ENCODE measurements at regions of chr6 and their contacts with region 1.

Region 1: GRCh38 chr6:166382933-166383801 is at the start of gene MPC1:
- DNase-seq: peak; percentile 96
- H3K4me3 ChIP-seq: peak within 1 kb of the TSS; percentile 82 to 95 (median 94)
- H3K27ac ChIP-seq: peak within 1 kb of the TSS; percentile 68
- H3K4me1 ChIP-seq: peaks cover 4% of the 10 kb centered on the region
- H3K27me3 ChIP-seq: no peaks in the 10 kb centered on the region
- CTCF ChIP-seq: no peak
- POLR2A ChIP-seq: peak; percentile 16
- total RNA-seq, gene MPC1: 17.5 and 22.9 TPM in 2 replicates

Region 2: GRCh38 chr6:165717732-165718465 is 665.3 kb before region 1 on chr6:
- CTCF ChIA-PET with region 1: no interaction called
- POLR2A ChIA-PET with region 1: no interaction called
- dilution Hi-C with region 1: no loop called
- intact Hi-C with region 1: no loop called
- DNase-seq: peak; percentile 53
- H3K4me3 ChIP-seq: no peak overlapping the region
- H3K27ac ChIP-seq: no peak overlapping the region
- H3K4me1 ChIP-seq: peaks cover 5% of the 10 kb centered on the region
- H3K27me3 ChIP-seq: peaks cover 0 to 2% of the 10 kb centered on the region in 2 experiments
- CTCF ChIP-seq: no peak
- POLR2A ChIP-seq: no peak

Region 3: GRCh38 chr6:166275714-166276166 is 107.4 kb before region 1 on chr6:
- CTCF ChIA-PET with region 1: interaction called, 13 read pairs
- POLR2A ChIA-PET with region 1: no interaction called
- dilution Hi-C with region 1: no loop called
- intact Hi-C with region 1: loop called (anchors 1 kb)
- DNase-seq: peak; percentile 54
- H3K4me3 ChIP-seq: no peak overlapping the region
- H3K27ac ChIP-seq: no peak overlapping the region
- H3K4me1 ChIP-seq: no peaks in the 10 kb centered on the region
- H3K27me3 ChIP-seq: no peaks in the 10 kb centered on the region
- CTCF ChIP-seq: peak; percentile 93 to 98
- POLR2A ChIP-seq: no peak

Region 4: GRCh38 chr6:166313255-166314070 is 69.7 kb before region 1 on chr6:
- CTCF ChIA-PET with region 1: interaction called, 22 read pairs
- POLR2A ChIA-PET with region 1: no interaction called
- dilution Hi-C with region 1: no loop called
- intact Hi-C with region 1: loop called (anchors 1 kb)
- DNase-seq: peak; percentile 45
- H3K4me3 ChIP-seq: no peak overlapping the region
- H3K27ac ChIP-seq: no peak overlapping the region
- H3K4me1 ChIP-seq: no peaks in the 10 kb centered on the region
- H3K27me3 ChIP-seq: peaks cover 19 to 23% of the 10 kb centered on the region in 2 experiments
- CTCF ChIP-seq: peak; percentile 73
- POLR2A ChIP-seq: no peak

Region 5: DNA sequence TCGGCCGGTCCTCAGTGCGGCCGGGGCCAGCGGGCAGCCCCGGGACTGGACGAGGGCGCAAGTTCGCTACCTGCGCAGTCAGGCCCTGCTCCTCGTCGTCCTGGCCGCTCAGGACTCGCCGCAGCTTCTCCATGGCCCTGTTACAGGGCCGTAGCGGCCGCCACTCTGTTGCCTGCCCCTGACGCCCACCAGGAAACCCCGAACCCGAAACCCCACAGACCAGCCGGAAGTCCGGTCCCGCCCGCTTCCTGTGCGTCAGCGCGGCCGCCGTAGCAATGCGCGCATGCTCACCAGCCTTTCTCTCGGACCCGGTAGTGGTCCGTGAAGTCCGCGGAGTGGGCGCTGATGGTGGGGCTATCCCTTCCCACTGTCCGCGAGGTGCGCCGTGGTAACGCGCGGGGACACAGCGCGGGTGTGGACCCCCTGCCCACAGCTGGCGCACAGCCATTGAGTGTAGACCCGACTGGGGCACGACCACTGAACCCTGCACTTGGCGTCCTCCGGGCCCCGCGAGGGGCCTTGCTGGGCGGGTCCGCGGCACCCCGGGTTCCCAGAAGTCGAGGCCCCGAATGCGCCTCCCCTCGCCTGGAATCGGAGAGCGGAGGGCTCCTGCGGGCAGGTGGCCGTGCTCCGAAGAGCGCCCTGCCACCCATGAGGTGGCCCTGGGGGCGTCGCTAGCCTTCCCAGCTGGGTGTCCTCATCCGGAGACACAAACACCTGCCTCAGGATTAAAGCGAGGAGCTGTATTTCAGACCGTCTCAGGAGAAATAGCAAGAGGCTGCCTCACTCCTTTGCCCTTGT is 40.6 kb before region 1 on chr6 and contains the start of gene SFT2D1:
- CTCF ChIA-PET with region 1: interaction called, 16 read pairs
- POLR2A ChIA-PET with region 1: no interaction called
- dilution Hi-C with region 1: no loop called
- intact Hi-C with region 1: loop called (anchors 1 kb)
- DNase-seq: peak; percentile 89
- H3K4me3 ChIP-seq: peak within 1 kb of the TSS; percentile 79 to 99 (median 93)
- H3K27ac ChIP-seq: peak within 1 kb of the TSS; percentile 95
- H3K4me1 ChIP-seq: peaks cover 13% of the 10 kb centered on the region
- H3K27me3 ChIP-seq: peaks cover 2 to 4% of the 10 kb centered on the region in 2 experiments
- CTCF ChIP-seq: no peak
- POLR2A ChIP-seq: peak; percentile 96
- total RNA-seq, gene SFT2D1: 21.2 and 22.9 TPM in 2 replicates

Region 6: GRCh38 chr6:166365221-166365620 is 17.9 kb before region 1 on chr6:
- CTCF ChIA-PET with region 1: interaction called, 25 read pairs
- POLR2A ChIA-PET with region 1: no interaction called
- dilution Hi-C with region 1: no loop called
- intact Hi-C with region 1: loop called (anchors 1 kb)
- DNase-seq: peak; percentile 85
- H3K4me3 ChIP-seq: no peak overlapping the region
- H3K27ac ChIP-seq: peak overlapping the region; percentile 27
- H3K4me1 ChIP-seq: peaks cover 18% of the 10 kb centered on the region
- H3K27me3 ChIP-seq: peaks cover 0 to 2% of the 10 kb centered on the region in 2 experiments
- CTCF ChIP-seq: no peak
- POLR2A ChIP-seq: no peak